ENCODE measurements at regions of chr3 and their contacts with region 1.

Region 1: DNA sequence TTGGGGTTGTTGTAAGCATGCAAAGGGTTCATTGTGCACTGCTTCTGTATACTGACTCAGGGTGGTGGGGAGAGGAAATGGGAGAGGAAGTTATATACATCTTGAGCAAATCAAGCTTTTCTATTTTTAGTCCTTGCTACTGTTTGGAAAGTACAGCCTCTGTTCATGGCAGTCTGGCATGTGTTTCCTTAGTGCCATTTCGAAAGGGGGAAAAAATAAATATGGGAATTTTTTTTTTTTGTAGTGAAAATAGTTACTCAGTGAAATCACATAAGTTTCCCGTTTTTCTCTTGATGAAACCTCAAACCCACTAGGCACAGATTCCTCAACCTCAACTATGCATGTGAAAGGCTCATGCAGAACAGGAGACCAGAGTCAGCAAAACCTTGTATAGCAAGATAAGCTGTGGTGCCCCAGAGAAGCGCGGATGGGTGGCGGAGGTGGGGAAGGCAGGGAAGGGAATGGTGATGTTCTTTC is 353.3 kb downstream of the LPP start:
- DNase-seq: no peak
- H3K4me3 ChIP-seq: no peak overlapping the region
- H3K27ac ChIP-seq: no peak overlapping the region
- H3K4me1 ChIP-seq: no peaks in the 10 kb centered on the region
- H3K27me3 ChIP-seq: no peaks in the 10 kb centered on the region
- CTCF ChIP-seq: no peak
- POLR2A ChIP-seq: no peak

Region 2: GRCh38 chr3:187210545-187211327 is 1296.5 kb before region 1 on chr3:
- intact Hi-C with region 1: loop called (anchors 10 kb)
- DNase-seq: peak in 1 of 2 donors; percentile 41
- H3K4me3 ChIP-seq: no peak overlapping the region
- H3K27ac ChIP-seq: peak overlapping the region; percentile 40 to 68
- H3K4me1 ChIP-seq: peaks cover 7 to 13% of the 10 kb centered on the region in 2 donors
- H3K27me3 ChIP-seq: no peaks in the 10 kb centered on the region
- CTCF ChIP-seq: no peak
- POLR2A ChIP-seq: no peak

Measured in breast epithelium (tissue), 4 donors.